ENCODE measurements at regions of chr2 and their contacts with region 1.

Region 1: GRCh38 chr2:74232426-74232825 is 34.0 kb downstream of the MTHFD2 start:
- DNase-seq: no peak
- H3K4me3 ChIP-seq: no peak overlapping the region
- H3K27ac ChIP-seq: no peak overlapping the region
- H3K4me1 ChIP-seq: no peaks in the 10 kb centered on the region
- H3K27me3 ChIP-seq: no peaks in the 10 kb centered on the region
- CTCF ChIP-seq: no peak

Region 2: GRCh38 chr2:74188018-74188601 is 44.3 kb before region 1 on chr2:
- CTCF ChIA-PET with region 1: no interaction called
- dilution Hi-C with region 1: loop called (anchors 5 kb)
- in situ Hi-C with region 1: no loop called
- intact Hi-C with region 1: no loop called
- DNase-seq: peak; percentile 94
- H3K4me3 ChIP-seq: no peak overlapping the region
- H3K27ac ChIP-seq: peak overlapping the region; percentile 28
- H3K4me1 ChIP-seq: peaks cover 17% of the 10 kb centered on the region
- H3K27me3 ChIP-seq: no peaks in the 10 kb centered on the region
- CTCF ChIP-seq: no peak